Natural killer cell (primary cell): ENCODE measurements at regions of chr15 and their contacts with region 1.

Region 1: DNA sequence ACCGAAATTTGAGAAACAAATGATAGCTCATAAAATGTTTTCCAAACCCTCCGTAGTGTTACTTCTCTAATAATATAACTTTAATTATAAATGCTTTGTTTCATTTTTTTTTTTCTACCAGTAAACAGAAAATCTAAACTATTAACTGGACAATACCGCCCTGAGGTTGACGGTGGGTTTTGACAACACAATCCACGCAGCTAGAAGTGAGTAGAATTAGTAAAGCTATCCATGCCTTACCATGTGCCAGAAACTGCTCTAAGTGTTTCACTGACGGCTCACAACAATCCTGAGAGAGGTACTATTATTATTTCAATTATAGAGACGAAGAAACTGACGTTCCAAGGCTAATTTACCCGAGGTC is 410 bp downstream of the NDUFAF1 start:
- DNase-seq: no peak
- ATAC-seq: peak in 2 of 3 donors; percentile 21 to 39
- H3K4me3 ChIP-seq: peak overlapping the region; percentile 80
- H3K4me3 Mint-ChIP-seq: peak overlapping the region; percentile 94
- H3K27ac ChIP-seq: peak overlapping the region; percentile 75
- H3K27ac Mint-ChIP-seq: peak overlapping the region; percentile 89 to 95
- H3K4me1 ChIP-seq: peaks cover 16% of the 10 kb centered on the region
- H3K4me1 Mint-ChIP-seq: peaks cover 10 to 15% of the 10 kb centered on the region in 2 donors
- H3K27me3 ChIP-seq: no peaks in the 10 kb centered on the region
- H3K27me3 Mint-ChIP-seq: no peaks in the 10 kb centered on the region
- CTCF ChIP-seq: no peak

Region 2: GRCh38 chr15:41331833-41332787 is 69.8 kb before region 1 on chr15 and contains the start of gene OIP5:
- intact Hi-C with region 1: loop called (anchors 1 kb)
- DNase-seq: peak; percentile 93 to 99
- ATAC-seq: peak; percentile 95 to 99 (median 96)
- H3K4me3 ChIP-seq: peak within 1 kb of the TSS; percentile 75
- H3K4me3 Mint-ChIP-seq: peak within 1 kb of the TSS; percentile 98
- H3K27ac ChIP-seq: peak within 1 kb of the TSS; percentile 46
- H3K27ac Mint-ChIP-seq: peak within 1 kb of the TSS; percentile 90 to 99
- H3K4me1 ChIP-seq: peaks cover 12% of the 10 kb centered on the region
- H3K4me1 Mint-ChIP-seq: peaks cover 26 to 27% of the 10 kb centered on the region in 2 donors
- H3K27me3 ChIP-seq: no peaks in the 10 kb centered on the region
- H3K27me3 Mint-ChIP-seq: no peaks in the 10 kb centered on the region
- CTCF ChIP-seq: peak; percentile 41
- total RNA-seq, gene OIP5: 0.29 to 0.64 TPM in 2 of 3 donors, not detected in the other

Region 3: DNA sequence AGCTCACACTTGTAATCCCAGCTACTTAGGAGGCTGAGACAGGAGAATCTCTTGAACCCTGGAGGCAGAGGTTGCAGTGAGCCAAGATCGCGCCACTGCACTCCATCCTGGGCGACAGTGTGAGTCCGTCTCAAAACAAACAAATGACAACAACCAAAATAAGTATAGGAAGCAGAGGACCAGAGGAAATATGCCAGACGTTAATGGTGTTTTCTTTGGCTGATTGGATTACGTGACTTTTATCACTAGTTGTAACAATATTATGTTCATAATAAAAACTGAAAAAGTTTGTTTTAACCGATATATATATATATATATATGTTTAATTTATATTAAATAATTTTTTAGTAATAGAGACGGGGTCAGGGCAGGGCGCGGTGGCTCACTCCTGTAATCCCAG is 47.5 kb before region 1 on chr15:
- intact Hi-C with region 1: no loop called
- DNase-seq: no peak
- ATAC-seq: no peak
- H3K4me3 ChIP-seq: no peak overlapping the region
- H3K4me3 Mint-ChIP-seq: no peak overlapping the region
- H3K27ac ChIP-seq: no peak overlapping the region
- H3K27ac Mint-ChIP-seq: no peak overlapping the region
- H3K4me1 ChIP-seq: no peaks in the 10 kb centered on the region
- H3K4me1 Mint-ChIP-seq: no peaks in the 10 kb centered on the region
- H3K27me3 ChIP-seq: no peaks in the 10 kb centered on the region
- H3K27me3 Mint-ChIP-seq: no peaks in the 10 kb centered on the region
- CTCF ChIP-seq: no peak

Region 4: DNA sequence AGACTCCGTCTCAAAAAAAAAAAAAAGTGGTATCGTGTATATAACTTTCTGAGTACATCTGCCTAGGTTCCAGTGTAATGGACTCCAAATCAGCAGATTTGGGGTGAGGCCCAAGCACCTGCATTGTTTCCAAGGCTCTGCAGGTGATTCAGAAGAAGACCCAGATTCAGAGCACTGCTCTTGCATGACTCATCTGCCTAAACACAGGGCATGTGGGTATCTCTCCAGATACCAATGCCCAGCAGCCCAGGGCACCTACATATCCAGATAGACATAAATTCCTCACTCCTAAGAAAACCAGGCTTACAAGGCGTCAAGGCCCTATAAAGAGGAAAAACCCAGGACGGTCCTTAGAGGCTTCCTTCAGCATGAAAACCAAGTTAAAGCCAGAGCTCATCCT is 23.9 kb before region 1 on chr15:
- intact Hi-C with region 1: no loop called
- DNase-seq: no peak
- ATAC-seq: no peak
- H3K4me3 ChIP-seq: no peak overlapping the region
- H3K4me3 Mint-ChIP-seq: no peak overlapping the region
- H3K27ac ChIP-seq: no peak overlapping the region
- H3K27ac Mint-ChIP-seq: no peak overlapping the region
- H3K4me1 ChIP-seq: no peaks in the 10 kb centered on the region
- H3K4me1 Mint-ChIP-seq: no peaks in the 10 kb centered on the region
- H3K27me3 ChIP-seq: no peaks in the 10 kb centered on the region
- H3K27me3 Mint-ChIP-seq: no peaks in the 10 kb centered on the region
- CTCF ChIP-seq: no peak

Region 5: GRCh38 chr15:41416742-41417406 is 15.0 kb after region 1 on chr15 and contains the start of gene RTF1:
- intact Hi-C with region 1: loop called (anchors 1 kb)
- DNase-seq: peak; percentile 97 to 99
- ATAC-seq: peak; percentile 96 to 98 (median 97)
- H3K4me3 ChIP-seq: peak within 1 kb of the TSS; percentile 62
- H3K4me3 Mint-ChIP-seq: peak within 1 kb of the TSS; percentile 96
- H3K27ac ChIP-seq: peak within 1 kb of the TSS; percentile 54
- H3K27ac Mint-ChIP-seq: peak within 1 kb of the TSS; percentile 86 to 89
- H3K4me1 ChIP-seq: peaks cover 23% of the 10 kb centered on the region
- H3K4me1 Mint-ChIP-seq: peaks cover 33 to 42% of the 10 kb centered on the region in 2 donors
- H3K27me3 ChIP-seq: no peaks in the 10 kb centered on the region
- H3K27me3 Mint-ChIP-seq: no peaks in the 10 kb centered on the region
- CTCF ChIP-seq: no peak
- total RNA-seq, gene RTF1: 35.8 to 53.1 (median 42.7) TPM

Region 6: GRCh38 chr15:41689834-41690233 is 287.9 kb after region 1 on chr15:
- intact Hi-C with region 1: no loop called
- DNase-seq: no peak
- ATAC-seq: no peak
- H3K4me3 ChIP-seq: no peak overlapping the region
- H3K4me3 Mint-ChIP-seq: no peak overlapping the region
- H3K27ac ChIP-seq: no peak overlapping the region
- H3K27ac Mint-ChIP-seq: peak overlapping the region in 1 of 2 donors; percentile 65
- H3K4me1 ChIP-seq: peaks cover 3% of the 10 kb centered on the region
- H3K4me1 Mint-ChIP-seq: peaks cover 57 to 66% of the 10 kb centered on the region in 2 donors
- H3K27me3 ChIP-seq: no peaks in the 10 kb centered on the region
- H3K27me3 Mint-ChIP-seq: no peaks in the 10 kb centered on the region
- CTCF ChIP-seq: no peak